ENCODE measurements at regions of chr2 and their contacts with region 1.

Region 1: GRCh38 chr2:112156152-112156986 is 18.2 kb downstream of the FBLN7 start:
- DNase-seq: peak in 6 of 9 donors; percentile 10 to 61 (median 22)
- ATAC-seq: peak; percentile 22
- H3K4me3 ChIP-seq: peak overlapping the region; percentile 25
- H3K4me3 Mint-ChIP-seq: peak overlapping the region; percentile 58 to 89 (median 84)
- H3K27ac ChIP-seq: peak overlapping the region; percentile 56
- H3K27ac Mint-ChIP-seq: peak overlapping the region; percentile 85 to 96 (median 90)
- H3K4me1 ChIP-seq: peaks cover 18 to 25% of the 10 kb centered on the region in 2 donors
- H3K4me1 Mint-ChIP-seq: peaks cover 15 to 47% (median 38%) of the 10 kb centered on the region in 7 donors
- H3K27me3 ChIP-seq: no peaks in the 10 kb centered on the region
- H3K27me3 Mint-ChIP-seq: no peaks in the 10 kb centered on the region

Region 2: GRCh38 chr2:112138159-112138773 is 18.1 kb before region 1 on chr2 and contains the start of gene FBLN7:
- CTCF ChIA-PET with region 1: no interaction called
- POLR2A ChIA-PET with region 1: interaction called, 7 read pairs
- intact Hi-C with region 1: loop called in 1 of 2 experiments (anchors 2 kb)
- DNase-seq: peak in 4 of 9 donors; percentile 10 to 22 (median 19)
- ATAC-seq: peak; percentile 18
- H3K4me3 ChIP-seq: peak within 1 kb of the TSS; percentile 63
- H3K4me3 Mint-ChIP-seq: peak within 1 kb of the TSS; percentile 64 to 89 (median 82)
- H3K27ac ChIP-seq: no peak within 1 kb of the TSS
- H3K27ac Mint-ChIP-seq: peak within 1 kb of the TSS in 8 of 9 donors; percentile 21 to 82 (median 57)
- H3K4me1 ChIP-seq: no peaks in the 10 kb centered on the region
- H3K4me1 Mint-ChIP-seq: peaks cover 8 to 18% (median 9%) of the 10 kb centered on the region in 7 donors
- H3K27me3 ChIP-seq: no peaks in the 10 kb centered on the region
- H3K27me3 Mint-ChIP-seq: peaks cover 12 to 37% (median 23%) of the 10 kb centered on the region in 5 donors
- total RNA-seq, gene FBLN7: 12.1 to 36.3 (median 20.5) TPM